CD14-positive monocyte (primary cell): ENCODE measurements at regions of chr7 and their contacts with region 1.

Region 1: GRCh38 chr7:92528188-92528957 is at the starts of genes PEX1 and RBM48:
- DNase-seq: peak; percentile 96 to 98 (median 97)
- H3K4me3 ChIP-seq: peak within 1 kb of the TSS; percentile 88 to 97 (median 92)
- H3K4me3 Mint-ChIP-seq: peak within 1 kb of the TSS; percentile 90 to 94
- H3K27ac ChIP-seq: peak within 1 kb of the TSS; percentile 87 to 97
- H3K27ac Mint-ChIP-seq: peak within 1 kb of the TSS; percentile 94 to 98 (median 96)
- H3K4me1 ChIP-seq: peaks cover 15 to 20% of the 10 kb centered on the region in 2 donors
- H3K4me1 Mint-ChIP-seq: peaks cover 16% of the 10 kb centered on the region
- H3K27me3 ChIP-seq: no peaks in the 10 kb centered on the region
- H3K27me3 Mint-ChIP-seq: no peaks in the 10 kb centered on the region
- CTCF ChIP-seq: no peak
- polyA plus RNA-seq, gene PEX1: 2.8 to 10.8 (median 2.9) TPM
- polyA plus RNA-seq, gene RBM48: 5.2 to 8.5 (median 6.1) TPM

Region 2: GRCh38 chr7:92245487-92246362 is 282.6 kb before region 1 on chr7 and contains the starts of genes ANKIB1 and KRIT1:
- intact Hi-C with region 1: loop called in 1 of 2 experiments (anchors 10 kb)
- DNase-seq: peak; percentile 75 to 82 (median 81)
- H3K4me3 ChIP-seq: peak within 1 kb of the TSS; percentile 66 to 83 (median 72)
- H3K4me3 Mint-ChIP-seq: peak within 1 kb of the TSS; percentile 98 to 99
- H3K27ac ChIP-seq: peak within 1 kb of the TSS; percentile 93 to 95
- H3K27ac Mint-ChIP-seq: peak within 1 kb of the TSS; percentile 98 to 100 (median 99)
- H3K4me1 ChIP-seq: peaks cover 22 to 36% of the 10 kb centered on the region in 2 donors
- H3K4me1 Mint-ChIP-seq: peaks cover 39% of the 10 kb centered on the region
- H3K27me3 ChIP-seq: no peaks in the 10 kb centered on the region
- H3K27me3 Mint-ChIP-seq: no peaks in the 10 kb centered on the region
- CTCF ChIP-seq: peak; percentile 18
- polyA plus RNA-seq, gene ANKIB1: 4.8 to 16.8 (median 5.7) TPM
- polyA plus RNA-seq, gene KRIT1: 4.7 to 28.8 (median 6.8) TPM

Region 3: GRCh38 chr7:92489634-92490033 is 38.7 kb before region 1 on chr7:
- intact Hi-C with region 1: no loop called
- DNase-seq: no peak
- H3K4me3 ChIP-seq: no peak overlapping the region
- H3K4me3 Mint-ChIP-seq: no peak overlapping the region
- H3K27ac ChIP-seq: no peak overlapping the region
- H3K27ac Mint-ChIP-seq: no peak overlapping the region
- H3K4me1 ChIP-seq: no peaks in the 10 kb centered on the region
- H3K4me1 Mint-ChIP-seq: no peaks in the 10 kb centered on the region
- H3K27me3 ChIP-seq: no peaks in the 10 kb centered on the region
- H3K27me3 Mint-ChIP-seq: no peaks in the 10 kb centered on the region
- CTCF ChIP-seq: no peak

Region 4: DNA sequence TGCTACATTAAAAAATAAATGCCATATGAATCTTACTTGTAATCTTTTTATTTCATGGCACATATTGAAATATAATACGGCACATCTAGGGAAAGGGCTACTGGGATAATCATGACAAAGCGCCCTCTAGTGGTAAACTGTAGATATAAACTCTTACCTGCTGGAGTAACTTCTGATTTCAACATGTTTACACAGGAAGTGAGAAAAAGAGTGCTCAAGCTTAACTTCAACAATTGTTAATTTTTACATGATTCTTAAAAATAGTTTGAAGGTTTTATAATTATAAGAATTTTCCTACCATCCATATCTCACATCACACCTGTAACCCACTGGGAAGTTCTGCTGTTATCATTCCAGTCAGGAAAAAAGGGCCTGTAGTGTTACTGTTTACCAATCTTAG is 699.9 kb after region 1 on chr7:
- intact Hi-C with region 1: loop called in 1 of 2 experiments (anchors 10 kb)
- DNase-seq: peak; percentile 41 to 81 (median 72)
- H3K4me3 ChIP-seq: no peak overlapping the region
- H3K4me3 Mint-ChIP-seq: no peak overlapping the region
- H3K27ac ChIP-seq: no peak overlapping the region
- H3K27ac Mint-ChIP-seq: peak overlapping the region in 1 of 7 donors; percentile 35
- H3K4me1 ChIP-seq: peaks cover 18 to 21% of the 10 kb centered on the region in 2 donors
- H3K4me1 Mint-ChIP-seq: peaks cover 15% of the 10 kb centered on the region
- H3K27me3 ChIP-seq: peaks cover 0 to 6% of the 10 kb centered on the region in 2 donors
- H3K27me3 Mint-ChIP-seq: peaks cover 0 to 11% (median 7%) of the 10 kb centered on the region in 3 donors
- CTCF ChIP-seq: peak; percentile 91